ENCODE measurements at regions of chrX and their contacts with region 1.

Region 1: DNA sequence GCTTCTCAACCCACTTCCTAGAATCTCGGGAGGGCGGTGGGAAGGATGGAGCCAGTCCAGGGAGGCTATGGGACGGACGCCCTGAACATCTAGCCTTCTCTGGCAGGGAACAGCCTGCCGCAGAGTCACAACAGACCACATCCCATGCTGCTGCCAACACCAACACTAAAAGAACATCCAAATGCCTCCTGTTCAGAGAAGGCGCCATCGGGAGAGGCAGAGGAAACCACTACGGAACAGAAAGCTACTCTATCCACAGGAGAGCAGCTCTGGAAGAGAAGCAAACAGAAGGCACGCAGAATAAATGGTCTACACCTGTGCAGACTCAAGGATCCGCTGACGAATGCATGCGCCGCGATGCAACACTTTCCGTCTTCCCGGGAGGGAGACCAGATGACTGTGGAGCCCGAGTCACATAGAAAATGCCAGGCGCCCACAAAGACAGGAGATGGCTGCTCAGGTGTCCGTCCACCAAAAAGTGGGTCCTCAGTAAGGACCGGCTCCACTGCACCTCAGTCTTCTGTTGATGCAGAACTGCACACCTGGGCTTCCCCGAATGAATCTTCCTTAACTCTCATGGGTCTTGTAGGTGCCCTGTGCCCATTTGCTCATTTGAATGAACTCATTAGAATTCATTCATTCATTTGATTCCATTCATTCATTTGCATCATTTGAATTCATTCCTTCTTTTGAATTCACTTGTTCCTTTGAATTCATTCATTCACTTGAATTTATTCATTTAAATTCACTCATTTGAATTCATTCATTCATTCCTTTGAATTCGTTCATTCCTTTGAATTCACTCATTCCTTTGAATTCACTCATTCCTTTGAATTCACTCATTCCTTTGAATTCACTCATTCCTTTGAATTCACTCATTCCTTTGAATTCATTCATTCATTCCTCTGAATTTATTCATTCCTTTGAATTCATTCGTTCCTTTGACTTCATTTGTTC is 217.4 kb downstream of the DHRSX start:
- DNase-seq: no peak
- ATAC-seq: no peak
- H3K4me3 ChIP-seq: no peak overlapping the region
- H3K27ac ChIP-seq: no peak overlapping the region
- H3K4me1 ChIP-seq: no peaks in the 10 kb centered on the region
- H3K27me3 ChIP-seq: no peaks in the 10 kb centered on the region
- CTCF ChIP-seq: no peak
- POLR2A ChIP-seq: no peak

Region 2: GRCh38 chrX:2577844-2578506 is 294.6 kb after region 1 on chrX:
- in situ Hi-C with region 1: loop called in 1 of 4 experiments (anchors 25 kb)
- intact Hi-C with region 1: no loop called
- DNase-seq: no peak
- ATAC-seq: no peak
- H3K4me3 ChIP-seq: no peak overlapping the region
- H3K27ac ChIP-seq: no peak overlapping the region
- H3K4me1 ChIP-seq: no peaks in the 10 kb centered on the region
- H3K27me3 ChIP-seq: peaks cover 14 to 26% (median 15%) of the 10 kb centered on the region in 3 donors
- CTCF ChIP-seq: no peak
- POLR2A ChIP-seq: no peak

Measured in gastrocnemius medialis (tissue), 4 donors.